ENCODE measurements at regions of chr1 and their contacts with region 1.

Region 1: DNA sequence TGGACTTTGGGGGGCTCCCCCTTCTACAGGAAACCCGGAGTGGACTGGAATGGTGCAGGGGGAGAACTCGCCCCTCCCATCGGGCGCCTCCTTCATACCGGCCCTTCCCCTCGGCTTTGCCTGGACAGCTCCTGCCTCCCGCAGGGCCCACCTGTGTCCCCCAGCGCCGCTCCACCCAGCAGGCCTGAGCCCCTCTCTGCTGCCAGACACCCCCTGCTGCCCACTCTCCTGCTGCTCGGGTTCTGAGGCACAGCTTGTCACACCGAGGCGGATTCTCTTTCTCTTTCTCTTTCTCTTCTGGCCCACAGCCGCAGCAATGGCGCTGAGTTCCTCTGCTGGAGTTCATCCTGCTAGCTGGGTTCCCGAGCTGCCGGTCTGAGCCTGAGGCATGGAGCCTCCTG is at the start of gene TNFRSF14:
- DNase-seq: peak; percentile 78
- H3K4me3 Mint-ChIP-seq: peak within 1 kb of the TSS; percentile 97
- H3K27ac Mint-ChIP-seq: peak within 1 kb of the TSS; percentile 93
- H3K4me1 Mint-ChIP-seq: peaks cover 16% of the 10 kb centered on the region
- H3K27me3 Mint-ChIP-seq: no peaks in the 10 kb centered on the region
- total RNA-seq, gene TNFRSF14: 191 and 199 TPM in 2 replicates

Region 2: GRCh38 chr1:1406817-1407635 is 1149.3 kb before region 1 on chr1 and contains the start of gene MRPL20:
- intact Hi-C with region 1: loop called (anchors 10 kb)
- DNase-seq: peak; percentile 96
- H3K4me3 Mint-ChIP-seq: peak within 1 kb of the TSS; percentile 88
- H3K27ac Mint-ChIP-seq: peak within 1 kb of the TSS; percentile 89
- H3K4me1 Mint-ChIP-seq: peaks cover 23% of the 10 kb centered on the region
- H3K27me3 Mint-ChIP-seq: no peaks in the 10 kb centered on the region
- total RNA-seq, gene MRPL20: 143 and 154 TPM in 2 replicates

Region 3: DNA sequence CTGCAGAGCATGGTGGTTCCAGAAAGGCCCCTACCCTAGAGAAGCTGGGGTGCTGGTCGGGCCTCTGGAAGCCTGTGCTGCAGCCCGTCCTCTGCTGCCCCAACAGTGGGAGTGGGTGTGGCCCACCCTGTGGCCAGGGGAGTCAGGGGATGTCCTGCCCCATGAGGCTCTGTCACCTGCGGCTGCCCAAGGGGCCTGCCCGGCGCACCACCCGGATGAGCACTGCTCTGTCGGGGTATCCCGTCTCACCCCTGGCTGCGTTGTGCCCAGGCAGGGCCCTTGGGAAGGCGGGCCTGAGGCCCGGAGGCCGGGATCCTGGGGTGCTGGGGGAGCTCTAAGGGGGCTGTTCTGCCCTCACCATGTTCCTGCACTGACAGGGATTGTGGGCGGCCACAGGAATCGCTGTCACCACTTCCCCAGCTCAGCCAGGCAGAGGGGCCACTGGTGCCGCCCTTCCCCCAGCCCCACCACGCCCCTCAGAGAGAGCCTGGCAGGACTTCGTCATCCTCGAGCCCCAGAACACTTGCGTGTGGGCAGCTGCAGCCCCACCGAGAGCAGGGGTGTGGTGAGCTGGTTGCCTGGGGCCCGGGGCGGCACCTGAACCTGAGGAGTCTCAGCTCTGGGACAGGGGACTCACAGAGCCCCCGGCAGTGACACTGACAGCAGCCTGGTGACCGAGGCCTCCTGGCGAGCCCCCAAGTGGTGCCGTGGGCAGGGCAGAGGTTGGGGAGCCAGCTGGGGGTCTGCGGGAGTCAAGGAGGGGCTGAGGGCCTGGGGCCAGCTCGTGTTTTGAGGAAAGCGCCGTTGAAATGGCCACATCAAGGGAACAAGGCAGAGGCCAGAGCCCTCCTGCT is 50.0 kb before region 1 on chr1:
- intact Hi-C with region 1: no loop called
- DNase-seq: no peak
- H3K4me3 Mint-ChIP-seq: no peak overlapping the region
- H3K27ac Mint-ChIP-seq: no peak overlapping the region
- H3K4me1 Mint-ChIP-seq: no peaks in the 10 kb centered on the region
- H3K27me3 Mint-ChIP-seq: no peaks in the 10 kb centered on the region

Region 4: DNA sequence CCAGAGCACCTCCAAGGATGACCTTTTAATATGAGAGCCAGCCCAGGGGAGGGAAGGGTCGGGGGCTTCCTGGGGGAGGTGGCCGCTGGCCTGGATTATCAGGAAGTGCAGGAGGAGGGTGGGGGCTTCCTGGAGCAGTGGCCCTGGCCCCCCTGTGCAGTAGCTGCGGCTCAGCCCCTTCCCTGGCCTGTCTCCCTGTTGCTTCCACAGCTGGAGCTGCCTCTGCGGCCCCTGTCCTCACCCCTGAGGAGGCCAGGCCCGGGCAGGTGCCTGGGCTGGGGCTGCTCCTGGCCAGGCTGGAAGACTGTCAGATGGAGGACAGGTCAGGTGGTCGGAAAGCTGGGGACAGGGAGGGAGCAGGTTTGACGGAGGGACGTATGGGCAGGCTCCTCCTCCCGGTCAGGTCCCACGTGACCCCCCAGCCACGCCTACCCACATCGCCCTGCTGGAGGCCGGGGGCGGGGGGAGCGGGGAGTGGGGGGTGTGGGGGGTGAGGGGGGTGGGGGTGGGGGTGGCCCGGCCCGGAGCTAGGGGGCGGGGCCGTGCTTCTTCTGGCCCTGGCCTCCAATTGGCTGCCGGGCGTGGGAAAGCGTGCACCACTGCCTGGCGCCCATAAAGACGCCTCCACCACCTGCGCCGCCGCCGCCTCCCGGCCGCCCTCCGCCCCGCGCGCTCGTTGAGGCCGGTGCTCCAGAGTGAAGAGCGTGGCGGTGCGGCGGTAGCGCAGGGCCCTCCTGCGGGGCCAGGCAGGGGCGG is 10.3 kb before region 1 on chr1:
- intact Hi-C with region 1: loop called (anchors 1 kb)
- DNase-seq: peak; percentile 86
- H3K4me3 Mint-ChIP-seq: peak overlapping the region; percentile 85
- H3K27ac Mint-ChIP-seq: no peak overlapping the region
- H3K4me1 Mint-ChIP-seq: peaks cover 15% of the 10 kb centered on the region
- H3K27me3 Mint-ChIP-seq: peaks cover 7% of the 10 kb centered on the region

Region 5: DNA sequence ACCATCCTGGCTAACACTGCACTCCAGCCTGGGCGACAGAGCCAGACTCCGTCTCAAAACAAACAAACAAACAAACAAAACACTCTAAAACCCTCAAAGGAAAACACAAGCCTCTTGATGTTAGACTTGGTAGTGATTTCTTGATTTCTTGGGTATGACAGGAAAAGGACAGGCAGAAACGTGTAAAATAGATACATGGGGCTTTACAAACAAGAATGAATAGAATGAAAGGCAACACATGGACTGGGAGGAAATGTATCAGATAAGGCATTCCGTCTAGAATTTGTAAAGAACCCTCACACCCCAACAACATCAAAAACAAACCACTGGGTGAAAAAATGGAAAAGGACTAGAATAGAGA is 22.5 kb after region 1 on chr1:
- intact Hi-C with region 1: loop called (anchors 1 kb)
- DNase-seq: no peak
- H3K4me3 Mint-ChIP-seq: peak overlapping the region; percentile 69
- H3K27ac Mint-ChIP-seq: peak overlapping the region; percentile 89
- H3K4me1 Mint-ChIP-seq: peaks cover 56% of the 10 kb centered on the region
- H3K27me3 Mint-ChIP-seq: no peaks in the 10 kb centered on the region

Region 6: DNA sequence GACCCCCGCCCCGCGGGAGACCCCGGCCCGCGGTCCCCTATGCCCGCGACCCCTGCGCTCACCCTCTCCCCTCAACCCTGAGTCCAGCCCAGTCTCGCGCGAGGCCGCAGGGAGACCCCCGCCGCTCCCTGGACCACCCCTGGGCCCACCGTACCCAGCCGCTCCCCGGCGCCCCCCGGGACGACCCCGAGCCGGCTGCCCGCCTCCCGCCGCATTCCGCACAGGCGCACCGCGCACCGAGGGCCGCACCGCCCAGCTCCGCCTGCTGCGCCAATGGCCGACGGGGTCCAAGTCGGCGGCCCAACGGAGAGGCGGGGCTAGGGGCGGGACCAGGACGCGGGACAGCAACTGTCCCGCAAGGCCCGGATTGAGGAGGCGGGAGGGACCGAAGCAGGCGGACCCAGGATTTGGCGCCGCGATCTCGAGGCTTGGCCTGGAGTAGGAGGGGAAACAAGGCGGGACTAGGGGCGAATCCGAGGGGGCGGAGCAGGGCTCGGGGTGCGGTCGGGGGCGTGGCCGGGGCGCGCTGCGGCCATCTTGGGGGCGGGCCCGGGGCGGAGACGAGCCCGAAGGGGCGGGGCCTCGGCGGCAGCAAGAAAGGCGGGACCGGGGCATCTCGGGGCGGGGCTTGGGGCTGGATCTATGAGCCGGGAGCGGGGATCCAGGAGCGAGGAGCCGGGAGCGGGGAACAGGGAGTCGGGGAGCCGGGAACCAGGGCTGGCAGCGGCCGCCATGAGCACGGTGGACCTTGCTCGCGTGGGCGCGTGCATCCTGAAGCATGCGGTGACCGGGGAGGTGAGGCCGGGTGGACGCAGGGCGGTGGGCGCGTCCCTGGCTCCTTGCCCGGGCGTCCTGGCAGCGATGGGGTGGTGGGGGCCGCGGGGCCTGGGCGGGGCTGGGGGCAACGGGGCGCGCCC is 30.1 kb after region 1 on chr1 and contains the start of gene PRXL2B:
- intact Hi-C with region 1: loop called (anchors 1 kb)
- DNase-seq: peak; percentile 98
- H3K4me3 Mint-ChIP-seq: peak within 1 kb of the TSS; percentile 84
- H3K27ac Mint-ChIP-seq: peak within 1 kb of the TSS; percentile 86
- H3K4me1 Mint-ChIP-seq: peaks cover 33% of the 10 kb centered on the region
- H3K27me3 Mint-ChIP-seq: no peaks in the 10 kb centered on the region
- total RNA-seq, gene PRXL2B: 26.5 and 28.4 TPM in 2 replicates

Measured in activated T-helper 2 cell treated with anti-CD3 and anti-CD28 coated beads, Interferon-gamma antibody, Interleukin-2, Interleukin-4, amounts not matched to agents 10 μg/mL and 5 μg/mL and 100 μg/mL, durations not matched to agents 14 hours and 24 hours and 36 hours (primary cell).